OCI-LY7 (cell line): ENCODE measurements at regions of chr2 and their contacts with region 1.

Region 1: GRCh38 chr2:231601349-231602229 is 8.9 kb downstream of the TEX44 start:
- DNase-seq: peak; percentile 89
- H3K4me3 ChIP-seq: no peak overlapping the region
- H3K27ac ChIP-seq: no peak overlapping the region
- H3K4me1 ChIP-seq: peaks cover 44% of the 10 kb centered on the region
- CTCF ChIP-seq: peak; percentile 95

Region 2: DNA sequence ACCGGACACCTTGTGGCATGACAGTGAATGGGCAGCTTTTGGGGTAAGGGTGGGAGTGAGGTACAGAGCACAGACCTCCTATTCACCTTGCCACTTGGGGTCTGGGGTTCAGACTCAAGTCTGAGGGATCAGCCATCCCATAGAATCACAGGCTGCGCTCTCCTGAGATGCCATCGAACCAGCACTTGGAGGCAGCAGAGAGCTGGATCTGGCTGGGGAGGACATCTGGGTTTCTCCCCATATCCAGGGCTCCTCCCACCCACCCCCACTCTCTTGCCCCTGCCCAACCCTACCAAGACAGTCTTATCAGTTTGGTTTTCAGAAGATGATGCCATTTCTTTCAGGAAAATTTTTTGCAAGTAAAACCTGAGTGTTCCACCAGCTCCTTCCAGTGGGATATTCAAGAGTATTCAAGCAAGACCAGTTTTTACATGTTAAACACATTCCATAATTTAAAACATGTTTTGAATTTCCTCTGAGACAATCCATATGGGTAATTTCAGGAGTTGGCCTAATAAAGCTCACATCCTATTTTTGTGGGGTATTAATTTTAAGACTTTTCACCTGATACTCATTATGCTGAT is 38.1 kb before region 1 on chr2:
- CTCF ChIA-PET with region 1: no interaction called
- POLR2A ChIA-PET with region 1: no interaction called
- intact Hi-C with region 1: loop called (anchors 1 kb)
- DNase-seq: peak; percentile 68
- H3K4me3 ChIP-seq: no peak overlapping the region
- H3K27ac ChIP-seq: no peak overlapping the region
- H3K4me1 ChIP-seq: peaks cover 6% of the 10 kb centered on the region
- CTCF ChIP-seq: peak; percentile 76